Activated CD8-positive, alpha-beta T cell treated with anti-CD3 and anti-CD28 coated beads for 36 hours (primary cell): ENCODE measurements at regions of chr6 and their contacts with region 1.

Region 1: GRCh38 chr6:112043032-112044007 is 10.6 kb upstream of the CCN6 start:
- DNase-seq: peak; percentile 97
- ATAC-seq: peak; percentile 92
- H3K4me3 Mint-ChIP-seq: peak overlapping the region; percentile 86
- H3K27ac Mint-ChIP-seq: peak overlapping the region; percentile 99
- H3K4me1 Mint-ChIP-seq: peaks cover 40% of the 10 kb centered on the region
- H3K27me3 Mint-ChIP-seq: no peaks in the 10 kb centered on the region
- CTCF ChIP-seq: peak; percentile 90

Region 2: GRCh38 chr6:111483736-111484632 is 559.3 kb before region 1 on chr6:
- CTCF ChIA-PET with region 1: interaction called, 4 read pairs
- POLR2A ChIA-PET with region 1: no interaction called
- intact Hi-C with region 1: loop called (anchors 5 kb)
- DNase-seq: peak; percentile 88
- ATAC-seq: peak; percentile 59
- H3K4me3 Mint-ChIP-seq: peak overlapping the region; percentile 90
- H3K27ac Mint-ChIP-seq: peak overlapping the region; percentile 98
- H3K4me1 Mint-ChIP-seq: peaks cover 44% of the 10 kb centered on the region
- H3K27me3 Mint-ChIP-seq: no peaks in the 10 kb centered on the region
- CTCF ChIP-seq: no peak

Region 3: GRCh38 chr6:111764238-111765175 is 278.8 kb before region 1 on chr6:
- CTCF ChIA-PET with region 1: interaction called, 26 read pairs
- POLR2A ChIA-PET with region 1: no interaction called
- intact Hi-C with region 1: loop called (anchors 5 kb)
- DNase-seq: peak; percentile 81
- ATAC-seq: peak; percentile 56
- H3K4me3 Mint-ChIP-seq: peak overlapping the region; percentile 62
- H3K27ac Mint-ChIP-seq: peak overlapping the region; percentile 99
- H3K4me1 Mint-ChIP-seq: peaks cover 98% of the 10 kb centered on the region
- H3K27me3 Mint-ChIP-seq: no peaks in the 10 kb centered on the region
- CTCF ChIP-seq: no peak

Region 4: DNA sequence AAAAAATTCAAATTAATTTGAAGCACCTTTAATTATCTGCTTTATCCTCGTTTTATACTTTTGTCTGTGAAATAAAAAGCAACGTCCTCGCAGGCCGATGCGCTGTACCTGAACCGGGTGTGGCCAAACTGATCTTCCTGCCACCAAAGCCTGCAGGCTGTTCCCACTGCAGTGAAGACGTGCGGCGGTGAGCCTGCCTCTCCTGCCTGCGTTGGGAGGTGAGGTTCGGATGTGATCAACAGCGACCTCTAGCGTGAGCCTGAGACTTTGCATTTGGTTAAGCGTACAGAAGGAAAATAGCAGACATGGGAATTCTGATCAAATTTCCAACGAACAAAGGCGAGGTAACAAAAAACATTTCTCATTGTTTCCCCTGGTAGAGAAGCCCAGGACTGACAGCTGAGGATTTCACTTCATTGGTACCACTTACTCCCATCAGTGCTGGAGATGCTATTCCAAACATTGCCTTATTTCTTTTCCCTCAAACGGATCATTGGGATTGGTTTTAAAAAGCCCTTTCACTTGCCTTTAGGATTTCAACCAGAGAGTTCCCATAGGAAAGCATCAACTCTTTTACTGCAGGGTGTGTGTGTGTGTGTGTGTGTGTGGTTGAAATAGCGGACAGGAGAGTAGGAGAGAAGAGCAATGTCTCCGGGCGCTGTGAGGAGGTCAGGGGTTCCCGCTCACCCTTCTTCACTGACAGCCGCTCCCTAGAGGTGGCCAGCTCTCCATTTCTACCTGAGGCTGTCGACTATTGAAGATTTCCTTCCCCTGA is 46.1 kb before region 1 on chr6:
- CTCF ChIA-PET with region 1: interaction called, 13 read pairs
- POLR2A ChIA-PET with region 1: interaction called, 4 read pairs
- intact Hi-C with region 1: loop called (anchors 5 kb)
- DNase-seq: peak; percentile 84
- ATAC-seq: peak; percentile 65
- H3K4me3 Mint-ChIP-seq: peak overlapping the region; percentile 55
- H3K27ac Mint-ChIP-seq: peak overlapping the region; percentile 79
- H3K4me1 Mint-ChIP-seq: peaks cover 47% of the 10 kb centered on the region
- H3K27me3 Mint-ChIP-seq: no peaks in the 10 kb centered on the region
- CTCF ChIP-seq: peak; percentile 99

Region 5: DNA sequence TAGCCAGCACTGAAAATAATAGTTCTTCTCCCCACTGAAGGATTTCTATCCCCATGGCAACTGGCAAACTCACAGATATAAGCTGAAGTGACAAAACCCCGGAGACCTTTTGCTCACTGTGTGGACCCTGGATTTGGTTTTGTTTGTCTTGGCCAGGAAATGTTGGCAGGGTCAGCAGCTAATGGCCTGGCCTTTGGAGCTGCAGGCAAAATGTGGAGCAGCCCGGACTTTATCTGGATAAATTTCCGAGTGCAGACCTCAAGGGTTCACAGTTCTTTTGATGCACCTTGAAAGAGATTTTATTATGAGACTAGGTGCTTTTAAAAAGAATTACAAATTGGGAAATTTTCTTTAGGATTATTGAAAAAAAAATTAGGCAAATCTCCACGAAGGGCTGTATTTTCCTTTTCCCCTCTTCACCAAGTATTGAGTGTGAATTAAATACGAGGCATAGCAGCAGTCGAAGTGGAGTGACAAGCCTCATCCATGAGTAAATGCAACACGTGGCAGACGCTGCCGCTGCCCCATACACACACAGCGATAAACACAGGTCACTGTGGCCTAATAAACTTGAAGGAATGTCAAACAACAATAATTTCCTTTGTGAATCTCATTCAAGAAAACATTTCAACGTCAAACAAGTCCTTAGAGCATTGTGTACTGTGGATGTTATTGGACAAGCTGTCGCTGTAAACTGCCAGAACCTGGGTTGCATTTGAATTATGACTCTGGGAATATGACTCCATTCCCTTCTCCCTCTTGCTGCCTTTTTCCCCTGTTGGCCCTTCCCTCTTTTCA is 24.5 kb before region 1 on chr6:
- CTCF ChIA-PET with region 1: interaction called, 16 read pairs
- POLR2A ChIA-PET with region 1: interaction called, 6 read pairs
- intact Hi-C with region 1: no loop called
- DNase-seq: no peak
- ATAC-seq: no peak
- H3K4me3 Mint-ChIP-seq: no peak overlapping the region
- H3K27ac Mint-ChIP-seq: no peak overlapping the region
- H3K4me1 Mint-ChIP-seq: peaks cover 50% of the 10 kb centered on the region
- H3K27me3 Mint-ChIP-seq: no peaks in the 10 kb centered on the region
- CTCF ChIP-seq: no peak

Region 6: DNA sequence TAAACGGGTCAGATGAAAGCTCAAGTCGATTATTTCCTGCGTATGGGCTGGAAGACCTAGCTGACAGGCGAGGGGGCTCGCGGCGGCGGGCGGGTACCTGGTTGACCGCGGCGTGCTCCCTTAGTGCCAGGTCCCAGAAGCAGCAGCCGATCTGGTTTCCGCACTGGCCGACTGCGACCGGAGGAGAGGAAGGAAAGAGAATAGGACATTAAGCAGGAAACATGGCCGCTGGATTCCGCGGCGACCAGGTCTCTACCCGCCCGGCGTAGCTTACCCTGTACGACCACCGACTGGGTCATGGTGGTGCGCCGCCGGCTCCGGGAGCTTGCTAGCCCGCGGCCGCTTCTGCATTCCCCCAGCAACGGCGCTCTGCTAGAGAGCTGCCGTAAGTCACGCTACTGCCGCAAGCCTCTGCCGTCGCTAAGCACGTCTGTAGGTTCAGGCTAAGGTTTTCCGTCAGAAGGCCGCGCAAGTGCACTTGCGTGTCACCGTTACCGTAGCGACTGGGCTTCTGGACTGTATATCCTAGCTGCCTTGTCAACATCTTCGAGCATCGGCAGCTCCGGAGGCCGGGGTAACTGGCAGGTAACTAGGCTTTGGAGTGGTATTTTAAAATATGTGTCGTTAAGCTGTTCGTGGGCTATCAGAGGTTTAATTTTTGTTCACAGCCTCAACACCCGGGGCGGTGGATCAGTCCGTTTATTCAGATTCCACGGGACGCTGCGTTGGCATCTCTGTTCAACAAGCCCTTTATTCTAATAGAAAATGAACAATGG is 44.0 kb after region 1 on chr6 and contains the starts of genes FAM229B and TUBE1:
- CTCF ChIA-PET with region 1: interaction called, 10 read pairs
- POLR2A ChIA-PET with region 1: no interaction called
- intact Hi-C with region 1: no loop called
- DNase-seq: peak; percentile 95
- ATAC-seq: peak; percentile 98
- H3K4me3 Mint-ChIP-seq: no peak within 1 kb of the TSS
- H3K27ac Mint-ChIP-seq: no peak within 1 kb of the TSS
- H3K4me1 Mint-ChIP-seq: peaks cover 12% of the 10 kb centered on the region
- H3K27me3 Mint-ChIP-seq: peaks cover 6% of the 10 kb centered on the region
- CTCF ChIP-seq: no peak
- total RNA-seq, gene FAM229B: 7.6 to 10.2 TPM
- total RNA-seq, gene TUBE1: 38.7 to 39.1 TPM

Region 7: DNA sequence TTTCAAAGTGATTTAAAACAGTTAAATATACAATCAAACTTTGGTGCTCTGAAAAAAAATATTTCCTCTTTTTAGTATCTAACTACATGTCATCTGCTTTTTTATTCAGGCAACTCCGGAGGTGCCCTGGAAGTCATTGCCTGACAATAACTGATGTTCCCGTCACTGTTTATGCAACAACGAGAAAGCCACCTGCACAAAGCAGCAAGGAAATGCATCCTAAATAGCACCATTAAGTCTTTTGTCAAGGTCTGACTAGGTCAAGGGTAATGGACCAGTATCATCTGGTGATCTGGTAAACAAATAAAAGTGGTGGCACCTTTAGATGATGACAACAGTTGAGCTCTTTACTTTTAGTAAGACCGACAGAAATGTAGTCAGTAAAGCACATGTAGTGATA is 57.2 kb after region 1 on chr6:
- CTCF ChIA-PET with region 1: no interaction called
- POLR2A ChIA-PET with region 1: no interaction called
- intact Hi-C with region 1: no loop called
- DNase-seq: no peak
- ATAC-seq: no peak
- H3K4me3 Mint-ChIP-seq: no peak overlapping the region
- H3K27ac Mint-ChIP-seq: no peak overlapping the region
- H3K4me1 Mint-ChIP-seq: no peaks in the 10 kb centered on the region
- H3K27me3 Mint-ChIP-seq: no peaks in the 10 kb centered on the region
- CTCF ChIP-seq: no peak